Gastrocnemius medialis (tissue), 4 donors: ENCODE measurements at regions of chr9 and their contacts with region 1.

Region 1: GRCh38 chr9:37465249-37466036 is at the start of gene ZBTB5:
- DNase-seq: peak; percentile 99
- ATAC-seq: peak; percentile 92 to 94
- H3K4me3 ChIP-seq: peak within 1 kb of the TSS; percentile 70 to 92 (median 90)
- H3K27ac ChIP-seq: peak within 1 kb of the TSS; percentile 91 to 100 (median 97)
- H3K4me1 ChIP-seq: peaks cover 26 to 27% of the 10 kb centered on the region in 2 donors
- H3K27me3 ChIP-seq: no peaks in the 10 kb centered on the region
- CTCF ChIP-seq: peak in 1 of 5 experiments; percentile 16
- POLR2A ChIP-seq: peak; percentile 84 to 94
- total RNA-seq, gene ZBTB5: 5.6 to 7.0 (median 6.7) TPM

Region 2: DNA sequence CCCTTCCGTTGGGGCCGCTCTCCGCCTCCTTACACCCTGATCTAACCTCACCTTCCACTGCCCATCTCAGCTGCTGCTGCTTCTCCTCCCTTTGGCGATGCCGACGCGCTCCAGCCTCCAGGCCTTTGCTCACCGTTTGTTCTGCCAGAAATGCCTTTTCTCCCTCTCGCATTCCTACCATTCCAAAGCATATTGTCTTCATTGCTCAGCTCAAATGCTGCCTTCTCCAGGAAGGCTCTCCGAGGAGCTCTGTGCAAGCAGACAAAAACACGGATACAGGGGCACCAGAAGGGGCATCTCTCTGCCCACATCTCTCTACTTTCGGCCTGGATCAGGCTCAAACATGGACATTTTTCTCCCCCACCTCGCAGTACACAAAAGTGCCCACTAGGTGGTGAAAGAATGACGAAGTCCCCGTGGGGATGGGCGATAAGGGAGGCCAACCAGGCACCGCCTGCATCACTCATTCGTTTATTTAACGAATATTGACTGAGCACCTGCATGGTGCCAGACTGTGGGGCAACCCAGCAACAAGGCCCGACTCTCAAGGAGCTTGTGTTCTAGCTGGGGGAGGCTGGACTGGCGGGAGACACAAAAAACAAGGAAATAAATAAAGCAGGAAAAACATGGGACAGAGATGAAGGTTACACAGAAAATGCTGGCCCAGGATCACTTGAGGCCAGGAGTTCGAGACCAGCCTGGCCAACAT is 50.3 kb before region 1 on chr9:
- in situ Hi-C with region 1: loop called in 1 of 4 experiments (anchors 10 kb)
- intact Hi-C with region 1: no loop called
- DNase-seq: peak in 1 of 2 donors; percentile 54
- ATAC-seq: peak; percentile 50 to 72
- H3K4me3 ChIP-seq: no peak overlapping the region
- H3K27ac ChIP-seq: no peak overlapping the region
- H3K4me1 ChIP-seq: peaks cover 5 to 23% of the 10 kb centered on the region in 2 donors
- H3K27me3 ChIP-seq: no peaks in the 10 kb centered on the region
- CTCF ChIP-seq: peak; percentile 71 to 82 (median 77)
- POLR2A ChIP-seq: no peak

Region 3: GRCh38 chr9:37485389-37486219 is 20.2 kb after region 1 on chr9 and contains the start of gene POLR1E:
- in situ Hi-C with region 1: no loop called
- intact Hi-C with region 1: loop called (anchors 1 kb)
- DNase-seq: peak; percentile 86 to 94
- ATAC-seq: peak; percentile 95
- H3K4me3 ChIP-seq: peak within 1 kb of the TSS; percentile 75 to 89 (median 82)
- H3K27ac ChIP-seq: peak within 1 kb of the TSS; percentile 85 to 89 (median 88)
- H3K4me1 ChIP-seq: peaks cover 21 to 26% of the 10 kb centered on the region in 2 donors
- H3K27me3 ChIP-seq: no peaks in the 10 kb centered on the region
- CTCF ChIP-seq: no peak
- POLR2A ChIP-seq: peak; percentile 77 to 80
- total RNA-seq, gene POLR1E: 16.7 to 22.3 (median 17.6) TPM

Region 4: GRCh38 chr9:38068866-38069629 is 603.6 kb after region 1 on chr9 and contains the start of gene SHB:
- in situ Hi-C with region 1: loop called in 1 of 4 experiments (anchors 25 kb)
- intact Hi-C with region 1: no loop called
- DNase-seq: peak; percentile 70 to 76
- ATAC-seq: peak; percentile 71 to 72
- H3K4me3 ChIP-seq: peak within 1 kb of the TSS; percentile 85 to 99 (median 92)
- H3K27ac ChIP-seq: peak within 1 kb of the TSS; percentile 89 to 97 (median 94)
- H3K4me1 ChIP-seq: peaks cover 11 to 21% of the 10 kb centered on the region in 2 donors
- H3K27me3 ChIP-seq: no peaks in the 10 kb centered on the region
- CTCF ChIP-seq: peak in 4 of 5 experiments; percentile 29 to 47 (median 37)
- POLR2A ChIP-seq: peak; percentile 88 to 91
- total RNA-seq, gene SHB: 1.2 to 6.1 (median 4.6) TPM